ENCODE measurements at regions of chr3 and their contacts with region 1.

Region 1: GRCh38 chr3:112519424-112520001 is 20.2 kb upstream of the BTLA start:
- DNase-seq: peak; percentile 90
- H3K4me3 ChIP-seq: no peak overlapping the region
- H3K27ac ChIP-seq: no peak overlapping the region
- H3K27me3 ChIP-seq: no peaks in the 10 kb centered on the region
- CTCF ChIP-seq: peak; percentile 72

Region 2: GRCh38 chr3:111781561-111782446 is 737.7 kb before region 1 on chr3:
- in situ Hi-C with region 1: no loop called
- DNase-seq: no peak
- H3K4me3 ChIP-seq: no peak overlapping the region
- H3K27ac ChIP-seq: no peak overlapping the region
- H3K27me3 ChIP-seq: no peaks in the 10 kb centered on the region
- CTCF ChIP-seq: no peak

Region 3: GRCh38 chr3:112233081-112233480 is 286.4 kb before region 1 on chr3:
- in situ Hi-C with region 1: no loop called
- DNase-seq: no peak
- H3K4me3 ChIP-seq: no peak overlapping the region
- H3K27ac ChIP-seq: no peak overlapping the region
- H3K27me3 ChIP-seq: no peaks in the 10 kb centered on the region
- CTCF ChIP-seq: no peak

Region 4: GRCh38 chr3:112280266-112280665 is 239.2 kb before region 1 on chr3:
- in situ Hi-C with region 1: no loop called
- DNase-seq: no peak
- H3K4me3 ChIP-seq: no peak overlapping the region
- H3K27ac ChIP-seq: no peak overlapping the region
- H3K27me3 ChIP-seq: no peaks in the 10 kb centered on the region
- CTCF ChIP-seq: no peak

Region 5: GRCh38 chr3:112303764-112304325 is 215.7 kb before region 1 on chr3:
- in situ Hi-C with region 1: loop called (anchors 25 kb)
- DNase-seq: peak; percentile 20
- H3K4me3 ChIP-seq: peak overlapping the region; percentile 61
- H3K27ac ChIP-seq: no peak overlapping the region
- H3K27me3 ChIP-seq: no peaks in the 10 kb centered on the region
- CTCF ChIP-seq: no peak

Region 6: GRCh38 chr3:112374334-112374734 is 145.2 kb before region 1 on chr3:
- in situ Hi-C with region 1: no loop called
- DNase-seq: no peak
- H3K4me3 ChIP-seq: no peak overlapping the region
- H3K27ac ChIP-seq: no peak overlapping the region
- H3K27me3 ChIP-seq: no peaks in the 10 kb centered on the region
- CTCF ChIP-seq: no peak

Measured in brain microvascular endothelial cell (primary cell).